Right ventricle myocardium inferior (tissue), 1 donor: ENCODE measurements at regions of chr2 and their contacts with region 1.

Region 1: DNA sequence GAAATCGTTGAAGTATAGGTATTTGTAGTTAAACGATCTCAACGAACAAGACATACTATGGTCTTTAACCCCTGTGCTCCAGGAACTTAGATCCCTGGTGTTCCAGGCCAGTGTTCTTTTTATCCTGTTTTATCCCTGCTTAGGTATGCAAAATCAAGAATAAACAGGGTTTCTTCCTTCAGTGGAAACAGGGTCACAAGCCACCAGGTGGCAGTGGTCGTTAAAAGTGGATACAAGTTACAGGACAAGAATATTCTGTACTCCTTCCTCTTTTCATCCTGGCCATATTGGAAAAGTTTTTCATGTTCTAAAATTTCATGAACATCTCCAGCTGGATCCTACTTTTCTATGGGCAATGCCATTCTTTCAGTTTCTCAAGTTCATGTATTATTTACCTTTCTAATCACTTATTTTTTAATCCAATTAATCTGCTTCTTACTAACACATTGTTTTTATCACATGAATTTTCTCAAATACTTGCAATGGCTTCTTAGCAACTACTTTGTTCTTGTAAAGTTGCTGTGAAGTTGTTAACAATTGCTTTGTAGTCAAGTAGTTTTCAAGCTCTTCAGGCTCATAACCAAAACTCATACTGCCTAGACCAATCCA is 16.4 kb upstream of the HNMT start:
- DNase-seq: peak; percentile 83
- ATAC-seq: peak; percentile 65

Region 2: DNA sequence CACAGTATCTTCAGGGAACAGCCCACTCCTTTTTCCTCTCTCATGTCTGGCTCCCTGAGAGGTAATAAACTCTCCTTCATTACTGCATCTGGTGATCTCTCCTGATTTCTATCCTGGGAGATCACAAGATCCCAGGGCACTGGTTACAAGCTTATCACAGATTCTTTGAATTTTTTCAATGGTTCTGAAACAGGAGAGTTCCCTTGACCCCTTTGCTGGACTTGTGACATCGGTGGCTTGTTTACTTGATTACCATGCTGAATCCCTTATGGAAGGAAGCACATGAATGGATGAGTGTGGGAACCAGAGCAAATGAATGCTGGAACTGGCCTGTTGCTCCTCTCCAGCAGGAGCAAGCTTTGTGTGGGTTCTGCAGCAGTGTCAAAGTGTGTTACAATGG is 50.8 kb before region 1 on chr2:
- intact Hi-C with region 1: no loop called
- DNase-seq: no peak
- ATAC-seq: no peak

Region 3: DNA sequence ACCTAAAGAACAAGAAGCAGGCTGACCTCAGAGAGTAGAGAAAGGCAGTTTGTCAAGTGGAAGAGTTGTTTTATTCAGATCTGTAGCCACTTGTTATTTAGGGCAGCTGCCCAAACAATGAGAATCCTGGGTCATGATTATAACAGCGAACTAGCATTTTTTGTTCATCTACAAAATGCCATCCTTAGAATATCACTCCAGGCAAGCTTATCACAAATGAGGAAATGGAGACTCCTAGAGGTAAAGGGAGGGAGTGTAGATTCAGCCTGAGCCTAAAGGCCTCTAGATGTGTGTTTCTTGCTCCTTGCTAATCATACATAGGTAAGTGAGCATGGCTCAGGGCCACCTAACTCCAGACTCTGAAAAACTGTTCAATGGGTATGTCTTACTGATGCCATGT is 142.5 kb after region 1 on chr2:
- intact Hi-C with region 1: loop called (anchors 5 kb)
- DNase-seq: no peak
- ATAC-seq: no peak

Region 4: GRCh38 chr2:138373993-138374408 is 426.2 kb after region 1 on chr2:
- intact Hi-C with region 1: loop called (anchors 2 kb)
- DNase-seq: no peak
- ATAC-seq: no peak

Region 5: GRCh38 chr2:138787053-138787666 is 839.3 kb after region 1 on chr2:
- intact Hi-C with region 1: loop called (anchors 2 kb)
- DNase-seq: no peak
- ATAC-seq: no peak